ENCODE measurements at regions of chr5 and their contacts with region 1.

Region 1: DNA sequence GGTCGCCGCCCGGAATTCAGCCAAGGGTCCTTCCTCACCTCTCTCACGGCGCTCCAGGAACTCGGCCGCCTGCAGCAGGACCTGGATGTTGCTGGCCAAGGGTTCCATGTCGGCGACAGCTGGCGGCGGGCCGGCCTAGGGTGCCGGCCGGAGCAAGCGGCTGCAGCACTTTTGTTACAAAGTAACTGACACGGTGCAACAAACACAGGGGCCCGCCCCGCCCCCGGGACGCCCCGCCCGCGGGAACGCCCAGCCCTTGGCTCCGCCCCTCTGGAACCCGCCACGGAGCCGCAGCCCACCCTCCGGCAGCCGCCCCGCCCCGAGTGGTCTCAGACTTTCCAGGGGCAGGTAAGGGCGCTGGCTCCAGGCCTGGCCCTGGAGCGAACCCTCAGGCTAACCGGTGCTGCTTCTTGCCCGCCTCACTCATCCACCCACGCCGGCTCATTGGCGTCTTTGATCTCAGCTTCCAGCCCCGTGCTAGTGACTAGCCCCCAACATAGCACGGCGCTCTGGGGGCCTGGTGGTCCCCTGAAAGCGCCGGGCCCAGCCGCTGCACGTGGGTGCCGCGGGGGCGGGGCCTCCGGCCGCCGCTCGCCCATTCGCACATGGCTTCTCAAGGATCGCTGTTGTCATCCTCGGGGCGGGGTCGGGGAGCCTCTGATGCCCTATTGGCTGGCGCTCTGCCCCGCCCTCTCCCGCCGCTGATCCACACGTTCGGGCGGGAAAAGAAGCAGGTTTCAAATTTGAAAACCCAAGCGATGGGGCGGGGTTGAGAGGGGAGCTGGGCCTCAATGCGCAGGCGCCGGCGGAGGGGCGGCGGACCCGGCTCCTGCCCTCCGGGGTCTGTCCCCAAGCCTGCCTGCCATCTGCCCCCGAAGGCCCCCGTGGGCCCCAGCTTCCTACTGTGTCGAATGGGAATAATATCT is at the start of gene MXD3:
- DNase-seq: peak; percentile 62
- H3K4me3 ChIP-seq: peak within 1 kb of the TSS; percentile 66
- H3K27me3 ChIP-seq: no peaks in the 10 kb centered on the region
- CTCF ChIP-seq: no peak
- polyA plus RNA-seq, gene MXD3: 11.8 and 18.1 TPM in 2 replicates

Region 2: DNA sequence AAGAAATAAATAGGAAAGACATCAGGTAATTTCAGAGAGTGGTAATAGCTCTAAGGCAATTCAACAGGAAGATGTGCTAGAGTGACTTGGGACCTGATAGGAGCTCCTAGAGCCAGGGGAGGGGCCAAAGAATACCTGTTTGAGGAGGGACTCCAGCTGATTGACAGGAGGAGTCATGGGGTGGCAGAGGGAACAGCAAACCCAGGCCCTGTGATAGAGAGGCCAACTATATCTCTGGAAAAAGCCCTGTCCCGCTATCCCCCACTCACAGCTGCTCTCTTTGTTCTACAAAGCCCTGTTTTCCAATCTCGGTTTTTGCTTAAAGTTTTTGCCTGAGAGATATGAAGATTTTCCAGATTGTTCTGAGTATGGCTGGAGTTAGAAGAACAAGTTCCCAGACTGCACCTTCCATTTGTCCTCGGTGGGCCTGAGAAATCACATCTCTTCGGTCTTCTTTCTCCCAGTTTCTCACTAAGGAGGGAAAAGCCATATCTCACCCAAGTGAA is 187.4 kb before region 1 on chr5:
- CTCF ChIA-PET with region 1: no interaction called
- POLR2A ChIA-PET with region 1: interaction called, 23 read pairs
- DNase-seq: no peak
- H3K4me3 ChIP-seq: no peak overlapping the region
- H3K27me3 ChIP-seq: no peaks in the 10 kb centered on the region
- CTCF ChIP-seq: no peak

Region 3: DNA sequence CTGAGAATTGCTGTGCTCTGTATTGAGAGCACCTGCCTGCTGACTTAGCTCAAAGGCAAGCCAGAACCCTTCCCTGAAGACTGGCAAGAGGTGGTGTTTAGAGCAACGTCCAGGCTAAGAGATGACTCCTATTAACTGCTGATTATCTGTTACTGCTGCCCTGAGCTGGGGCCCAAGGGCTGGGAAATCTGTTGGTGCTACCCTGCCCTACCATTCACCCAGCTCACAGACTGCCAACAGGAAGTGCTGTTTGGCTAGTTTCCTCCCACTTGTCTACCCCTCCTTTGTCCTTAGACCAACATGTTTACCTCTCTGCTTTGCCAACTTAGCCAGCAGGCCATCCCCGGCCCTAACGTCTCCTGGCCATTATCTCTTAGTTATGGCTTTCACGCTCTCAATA is 15.4 kb before region 1 on chr5:
- CTCF ChIA-PET with region 1: interaction called, 27 read pairs
- POLR2A ChIA-PET with region 1: no interaction called
- DNase-seq: no peak
- H3K4me3 ChIP-seq: no peak overlapping the region
- H3K27me3 ChIP-seq: no peaks in the 10 kb centered on the region
- CTCF ChIP-seq: no peak

Measured in BJ (cell line).